ENCODE measurements at regions of chr13 and their contacts with region 1.

Region 1: DNA sequence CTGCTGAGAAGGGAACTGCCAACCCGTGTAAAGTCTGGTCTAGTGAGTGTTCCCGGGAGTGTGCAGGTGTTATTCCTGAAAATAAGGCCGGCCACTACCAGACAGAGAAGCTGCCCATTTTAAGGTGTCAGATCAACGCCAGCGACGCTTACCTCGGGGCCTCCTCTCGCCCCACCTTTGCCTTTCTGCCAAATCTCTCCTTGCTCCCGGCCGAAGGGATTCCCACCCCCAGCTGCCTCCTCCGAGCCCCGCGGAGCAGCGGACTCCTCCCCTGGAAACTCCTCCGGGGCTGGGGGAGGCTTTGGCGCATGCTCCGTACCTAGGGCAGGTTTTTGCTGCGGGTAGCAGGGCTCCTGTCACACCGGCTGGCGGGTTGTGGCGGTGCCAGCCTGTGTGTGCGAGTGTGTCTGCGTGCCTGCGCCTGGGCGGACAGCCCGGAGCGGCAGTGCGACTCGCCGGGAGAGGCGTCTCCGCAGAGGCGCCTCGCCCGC is at the start of gene HS6ST3:
- DNase-seq: peak in 3 of 5 donors; percentile 10 to 30 (median 12)
- H3K4me3 ChIP-seq: peak within 1 kb of the TSS; percentile 39
- H3K27ac ChIP-seq: no peak within 1 kb of the TSS
- H3K4me1 ChIP-seq: peaks cover 10% of the 10 kb centered on the region
- H3K27me3 ChIP-seq: no peaks in the 10 kb centered on the region
- CTCF ChIP-seq: no peak
- EP300 ChIP-seq: no peak
- POLR2A ChIP-seq: no peak
- total RNA-seq, gene HS6ST3: 0.05 to 0.46 (median 0.21) TPM in 4 of 7 donors, not detected in the others

Region 2: DNA sequence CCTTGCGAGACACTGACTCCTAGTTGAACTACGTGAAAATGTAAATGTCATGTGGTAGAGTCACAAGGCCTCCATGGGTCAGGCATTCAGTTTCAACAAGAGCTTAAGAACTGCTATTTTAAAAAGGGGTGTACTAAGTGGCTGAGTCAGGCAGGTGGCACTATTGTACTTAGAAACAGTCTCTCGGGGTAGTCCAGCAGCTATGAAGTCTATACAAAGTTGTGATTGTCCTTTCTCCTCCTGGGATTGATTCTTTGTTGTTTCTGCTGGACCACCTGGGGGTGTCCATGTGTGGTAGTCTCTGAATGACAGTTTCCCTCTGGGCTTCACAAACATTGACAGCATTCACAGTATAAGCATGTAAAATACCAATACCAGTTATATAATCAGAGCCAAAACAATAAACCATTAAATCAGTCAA is 69.6 kb before region 1 on chr13:
- intact Hi-C with region 1: loop called in 1 of 4 experiments (anchors 5 kb)
- DNase-seq: no peak
- H3K4me3 ChIP-seq: no peak overlapping the region
- H3K27ac ChIP-seq: no peak overlapping the region
- H3K4me1 ChIP-seq: peaks cover 2% of the 10 kb centered on the region
- H3K27me3 ChIP-seq: no peaks in the 10 kb centered on the region
- CTCF ChIP-seq: no peak
- EP300 ChIP-seq: no peak
- POLR2A ChIP-seq: no peak

Region 3: DNA sequence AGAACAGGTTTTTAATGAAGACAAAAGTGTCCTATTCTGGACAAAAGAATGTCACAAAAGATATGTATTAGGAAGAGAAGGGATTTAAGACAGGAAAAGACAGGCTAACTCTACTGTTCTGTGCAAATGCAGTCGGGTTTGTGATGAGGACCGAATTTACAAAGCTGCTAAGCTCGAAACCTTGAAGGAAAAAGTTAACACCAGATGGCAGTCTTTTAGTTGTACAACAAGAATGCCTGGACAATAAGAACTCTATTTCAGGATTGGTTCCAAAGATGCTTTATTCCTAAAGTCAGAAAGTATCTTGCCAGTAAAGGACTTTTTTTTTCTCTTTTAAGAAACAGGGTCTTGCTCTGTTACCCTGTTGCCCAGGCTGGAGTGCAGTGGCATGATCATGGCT is 51.2 kb after region 1 on chr13:
- intact Hi-C with region 1: no loop called
- DNase-seq: no peak
- H3K4me3 ChIP-seq: no peak overlapping the region
- H3K27ac ChIP-seq: no peak overlapping the region
- H3K4me1 ChIP-seq: no peaks in the 10 kb centered on the region
- H3K27me3 ChIP-seq: no peaks in the 10 kb centered on the region
- CTCF ChIP-seq: no peak
- EP300 ChIP-seq: no peak
- POLR2A ChIP-seq: no peak

Region 4: DNA sequence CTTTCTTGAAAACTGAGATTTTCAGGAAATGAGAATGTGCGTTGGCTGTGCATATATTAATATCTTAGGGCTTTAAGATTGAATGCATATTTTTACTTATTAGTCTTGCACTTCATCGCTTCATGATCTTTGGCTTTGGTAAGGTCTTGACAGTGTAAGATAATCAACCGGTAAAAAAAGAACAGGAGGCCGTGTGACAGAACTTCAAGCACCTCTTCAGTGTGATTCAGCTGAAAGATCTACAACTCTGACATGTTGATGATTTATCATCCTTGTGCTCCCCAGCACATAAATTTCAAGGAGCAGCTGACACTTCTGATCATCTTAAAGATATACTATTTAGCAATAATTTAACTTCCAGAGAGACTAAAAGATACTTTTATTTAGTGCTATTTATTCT is 195.2 kb after region 1 on chr13:
- intact Hi-C with region 1: no loop called
- DNase-seq: no peak
- H3K4me3 ChIP-seq: no peak overlapping the region
- H3K27ac ChIP-seq: no peak overlapping the region
- H3K4me1 ChIP-seq: no peaks in the 10 kb centered on the region
- H3K27me3 ChIP-seq: no peaks in the 10 kb centered on the region
- CTCF ChIP-seq: no peak
- EP300 ChIP-seq: no peak
- POLR2A ChIP-seq: no peak